B cell (primary cell): ENCODE measurements at regions of chr14 and their contacts with region 1.

Region 1: GRCh38 chr14:70780396-70781075 is 28.8 kb downstream of the MAP3K9 start:
- DNase-seq: peak; percentile 84
- ATAC-seq: peak; percentile 95
- H3K4me3 ChIP-seq: peak overlapping the region in 3 of 5 experiments; percentile 12 to 33 (median 17)
- H3K4me3 Mint-ChIP-seq: peak overlapping the region; percentile 69
- H3K27ac ChIP-seq: peak overlapping the region; percentile 85 to 91
- H3K27ac Mint-ChIP-seq: peak overlapping the region; percentile 94
- H3K4me1 ChIP-seq: peaks cover 40 to 47% of the 10 kb centered on the region in 2 donors
- H3K4me1 Mint-ChIP-seq: peaks cover 60% of the 10 kb centered on the region
- H3K27me3 ChIP-seq: no peaks in the 10 kb centered on the region
- H3K27me3 Mint-ChIP-seq: no peaks in the 10 kb centered on the region
- CTCF ChIP-seq: no peak

Region 2: GRCh38 chr14:70803321-70804310 is 23.1 kb after region 1 on chr14:
- CTCF ChIA-PET with region 1: interaction called, 22 read pairs
- POLR2A ChIA-PET with region 1: interaction called, 17 read pairs
- intact Hi-C with region 1: loop called (anchors 1 kb)
- DNase-seq: peak; percentile 66
- ATAC-seq: peak; percentile 76
- H3K4me3 ChIP-seq: peak overlapping the region in 3 of 5 experiments; percentile 0 to 45 (median 24)
- H3K4me3 Mint-ChIP-seq: peak overlapping the region; percentile 62
- H3K27ac ChIP-seq: peak overlapping the region; percentile 6 to 50
- H3K27ac Mint-ChIP-seq: peak overlapping the region; percentile 74
- H3K4me1 ChIP-seq: peaks cover 24 to 30% of the 10 kb centered on the region in 2 donors
- H3K4me1 Mint-ChIP-seq: peaks cover 42% of the 10 kb centered on the region
- H3K27me3 ChIP-seq: no peaks in the 10 kb centered on the region
- H3K27me3 Mint-ChIP-seq: no peaks in the 10 kb centered on the region
- CTCF ChIP-seq: no peak